ENCODE measurements at regions of chr16 and their contacts with region 1.

Region 1: GRCh38 chr16:57591086-57591869 is 37.2 kb upstream of the ADGRG1 start:
- DNase-seq: peak; percentile 80
- ATAC-seq: peak; percentile 97
- H3K4me3 ChIP-seq: peak overlapping the region in 1 of 2 experiments; percentile 23; a peak in 1 of 4 replicates
- H3K27ac ChIP-seq: no peak overlapping the region
- H3K4me1 ChIP-seq: peaks cover 10% of the 10 kb centered on the region; the same call in 1 of the 2 replicates
- H3K27me3 ChIP-seq: no peaks in the 10 kb centered on the region
- CTCF ChIP-seq: peak; percentile 88

Region 2: GRCh38 chr16:57634171-57634570 is 42.9 kb after region 1 on chr16:
- CTCF ChIA-PET with region 1: no interaction called
- POLR2A ChIA-PET with region 1: no interaction called
- in situ Hi-C with region 1: no loop called
- intact Hi-C with region 1: loop called (anchors 5 kb)
- DNase-seq: no peak
- ATAC-seq: no peak
- H3K4me3 ChIP-seq: no peak overlapping the region
- H3K27ac ChIP-seq: no peak overlapping the region
- H3K4me1 ChIP-seq: peaks cover 27% of the 10 kb centered on the region
- H3K27me3 ChIP-seq: no peaks in the 10 kb centered on the region
- CTCF ChIP-seq: no peak

Region 3: GRCh38 chr16:57648590-57649442 is 57.5 kb after region 1 on chr16:
- CTCF ChIA-PET with region 1: interaction called, 5 read pairs
- POLR2A ChIA-PET with region 1: no interaction called
- in situ Hi-C with region 1: no loop called
- intact Hi-C with region 1: loop called (anchors 2 kb)
- DNase-seq: peak; percentile 85
- ATAC-seq: peak; percentile 79
- H3K4me3 ChIP-seq: no peak overlapping the region
- H3K27ac ChIP-seq: no peak overlapping the region
- H3K4me1 ChIP-seq: peaks cover 4% of the 10 kb centered on the region
- H3K27me3 ChIP-seq: no peaks in the 10 kb centered on the region
- CTCF ChIP-seq: peak; percentile 99

Region 4: DNA sequence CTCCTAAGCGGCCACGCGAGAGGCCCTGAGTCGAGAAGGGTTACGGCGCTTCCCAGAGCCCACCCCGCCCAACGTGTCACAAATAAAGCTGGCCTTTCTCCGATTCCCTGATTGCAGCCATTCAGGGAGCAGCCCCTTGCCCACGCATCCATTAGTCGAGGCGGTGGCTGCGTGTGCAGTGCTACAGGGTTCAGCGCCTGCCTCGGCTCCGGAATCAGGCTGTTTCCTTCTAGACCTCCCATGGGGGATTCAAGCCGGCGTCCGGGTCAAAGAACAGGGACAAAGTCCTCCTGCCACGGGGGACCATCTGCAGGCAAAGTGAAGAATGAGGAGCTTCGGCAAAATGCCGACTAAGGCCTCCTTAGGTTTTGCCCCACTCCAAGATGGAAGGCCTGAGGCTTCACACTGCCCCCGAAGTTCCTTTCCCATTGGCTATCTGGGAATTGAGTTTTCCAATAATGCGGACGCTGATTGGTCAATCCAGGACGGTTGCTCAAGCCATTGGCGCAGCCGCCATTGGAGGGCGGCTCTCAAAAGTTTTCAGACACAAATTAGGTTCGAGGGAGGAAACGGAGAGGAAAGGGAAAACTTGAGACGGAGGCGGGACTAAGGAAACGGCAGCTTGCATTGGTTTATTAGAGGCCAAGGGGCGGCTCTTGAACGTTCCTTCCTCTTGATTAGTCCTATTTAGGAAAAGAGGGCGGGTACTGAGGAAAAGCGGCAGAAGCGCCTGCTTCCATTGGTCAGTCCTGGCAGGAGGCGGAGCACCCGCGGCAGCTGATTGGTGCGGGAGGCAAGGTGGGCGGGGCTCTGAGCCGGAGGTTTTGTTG is 143.9 kb after region 1 on chr16:
- CTCF ChIA-PET with region 1: interaction called, 3 read pairs
- POLR2A ChIA-PET with region 1: interaction called, 7 read pairs
- in situ Hi-C with region 1: no loop called
- intact Hi-C with region 1: loop called (anchors 5 kb)
- DNase-seq: peak; percentile 98
- ATAC-seq: peak; percentile 97
- H3K4me3 ChIP-seq: peak overlapping the region; percentile 75 to 81
- H3K27ac ChIP-seq: peak overlapping the region; percentile 93
- H3K4me1 ChIP-seq: peaks cover 4% of the 10 kb centered on the region
- H3K27me3 ChIP-seq: no peaks in the 10 kb centered on the region
- CTCF ChIP-seq: no peak